ENCODE measurements at regions of chr6 and their contacts with region 1.

Region 1: DNA sequence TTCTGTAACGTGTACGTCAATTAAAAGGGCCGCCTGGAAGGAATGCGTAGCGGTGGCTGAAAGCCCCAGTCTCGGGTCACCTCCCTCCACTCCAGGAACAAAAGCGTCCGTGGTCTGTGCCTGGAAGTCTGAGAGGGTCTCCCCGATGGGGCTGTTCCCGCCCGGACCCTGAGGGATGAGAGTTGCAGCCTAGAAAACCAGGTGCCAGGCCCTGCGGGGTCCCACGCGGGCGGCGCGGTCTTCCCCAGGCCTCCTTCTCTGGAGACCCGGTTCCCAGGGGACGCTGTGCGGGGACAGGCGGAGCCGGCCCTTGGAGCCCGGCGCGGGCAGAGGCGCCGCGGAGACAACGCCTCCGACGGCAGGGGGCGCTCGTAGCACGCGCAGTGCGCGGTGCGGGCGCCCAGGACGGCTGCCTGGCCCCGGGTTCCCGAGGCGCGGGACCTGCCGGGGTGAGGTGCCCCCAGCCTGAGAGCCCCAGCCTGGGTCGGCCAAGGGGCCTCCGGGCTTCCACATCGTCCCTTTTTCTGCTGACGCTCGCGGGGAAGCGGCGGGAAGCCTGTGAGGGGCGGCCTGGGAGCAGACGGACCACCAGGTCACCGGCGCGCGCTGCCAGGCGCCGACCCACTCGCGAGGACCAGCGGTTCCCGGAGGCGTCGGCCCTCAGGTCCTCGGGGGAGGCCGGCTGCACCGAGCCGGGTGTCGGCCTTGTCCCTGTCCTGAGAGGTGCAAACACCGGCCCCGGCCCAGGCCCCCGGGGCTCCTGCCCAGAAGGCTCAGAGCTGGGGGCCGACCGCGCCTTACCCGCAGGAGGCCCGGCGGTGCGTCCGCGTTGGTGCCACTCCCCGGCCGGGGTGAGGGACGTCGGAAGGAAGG is 5.3 kb upstream of the FOXC1 start:
- DNase-seq: peak; percentile 76
- ATAC-seq: peak; percentile 97

Region 2: DNA sequence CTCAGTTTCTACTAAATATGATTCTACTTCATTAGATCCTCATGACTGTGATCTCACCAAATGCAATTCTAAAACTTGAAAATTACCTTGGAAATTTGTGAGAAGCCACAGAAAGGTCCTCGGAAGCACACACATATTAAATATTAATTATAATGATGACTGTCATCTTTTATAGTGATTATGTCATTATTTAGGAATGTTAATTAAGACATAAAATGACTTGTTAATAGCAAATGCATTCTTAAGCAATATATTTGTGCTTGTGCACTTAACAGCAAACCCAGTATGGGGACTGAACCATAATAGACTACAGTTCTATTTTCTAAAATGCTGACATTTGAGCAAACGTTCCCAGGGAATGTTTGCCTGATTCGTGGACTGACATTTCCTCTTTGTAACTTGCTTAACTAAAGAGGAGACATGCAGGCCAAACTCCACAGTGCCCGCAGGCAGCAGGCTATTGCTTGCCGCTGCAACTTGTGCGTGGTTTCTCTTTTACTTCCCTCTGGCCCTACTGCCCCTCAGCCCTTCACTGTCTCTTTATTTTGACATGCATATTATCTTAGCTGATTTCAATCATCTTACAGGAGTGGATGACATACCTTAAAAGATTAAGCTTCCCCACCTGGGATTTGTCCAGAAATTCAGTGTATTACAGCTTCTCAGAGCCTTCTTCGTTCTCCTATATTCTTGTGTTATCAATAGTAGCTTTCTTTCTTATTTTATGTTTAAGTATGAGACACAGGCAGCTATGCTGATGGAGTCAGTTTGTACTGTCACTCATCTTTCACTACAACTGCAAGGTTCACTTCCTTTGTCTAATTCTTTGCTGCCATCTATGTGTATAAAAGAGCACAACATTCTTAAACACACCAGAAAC is 499.5 kb after region 1 on chr6:
- intact Hi-C with region 1: loop called (anchors 2 kb)
- DNase-seq: no peak
- ATAC-seq: peak; percentile 76

Measured in Right ventricle myocardium superior (tissue), 1 donor.